ENCODE measurements at regions of chr1 and their contacts with region 1.

Region 1: DNA sequence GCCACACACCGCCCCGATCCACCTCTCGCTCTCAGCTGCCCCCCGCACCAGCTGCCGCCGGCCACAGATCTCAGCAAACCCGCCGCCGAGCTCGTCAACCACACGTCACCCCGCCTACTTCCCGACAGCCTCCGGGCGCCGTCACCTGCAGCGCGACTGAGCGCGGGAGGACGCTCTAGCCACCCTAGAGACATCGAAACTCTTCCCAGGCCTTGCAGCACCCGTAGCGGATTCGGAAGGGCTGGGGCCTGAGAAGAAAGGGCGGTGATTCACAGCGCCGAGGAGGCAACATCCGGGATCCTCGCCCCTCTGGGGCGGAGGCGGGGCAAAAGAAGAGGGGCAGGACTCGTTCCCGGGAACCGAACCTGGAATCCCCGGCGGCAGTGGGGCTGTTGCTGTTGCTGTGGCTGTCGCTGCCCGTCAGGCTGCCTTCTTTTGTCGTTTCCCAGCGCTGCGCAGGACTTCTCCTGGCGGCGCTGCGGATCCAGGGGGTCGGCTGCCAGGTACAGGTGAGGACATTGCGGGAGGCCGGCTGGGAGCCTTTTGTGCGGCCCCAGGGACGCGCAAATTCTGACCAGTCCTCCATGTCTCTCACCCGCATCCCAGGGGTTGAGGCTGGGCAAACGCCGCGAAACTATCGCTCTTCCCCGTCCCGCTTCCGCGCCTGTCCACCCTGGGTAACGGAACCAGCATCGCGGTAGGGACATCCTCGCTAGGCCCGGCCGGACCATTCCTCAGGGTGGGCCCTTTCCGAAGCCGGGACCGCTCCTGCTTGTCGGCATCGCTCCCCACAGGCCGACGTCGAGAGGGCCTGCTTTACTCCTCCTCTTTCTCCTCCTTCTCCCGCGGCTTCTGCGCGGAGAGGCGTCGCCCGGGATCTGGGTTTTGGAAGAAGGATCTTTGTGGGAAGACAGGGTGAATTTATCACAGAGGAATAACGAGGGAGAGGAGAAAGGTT is at the starts of genes RO60 and UCHL5:
- DNase-seq: peak; percentile 96
- H3K4me3 ChIP-seq: peak within 1 kb of the TSS; percentile 63 to 80
- H3K27ac ChIP-seq: peak within 1 kb of the TSS; percentile 93 to 95
- H3K4me1 ChIP-seq: peaks cover 0 to 4% of the 10 kb centered on the region in 2 donors
- H3K27me3 ChIP-seq: no peaks in the 10 kb centered on the region
- CTCF ChIP-seq: peak in 2 of 4 experiments; percentile 22 to 59
- POLR2A ChIP-seq: peak; percentile 74 to 84
- total RNA-seq, gene RO60: 68.9 to 290 (median 98.1) TPM
- total RNA-seq, gene UCHL5: 7.4 to 40.9 (median 23.1) TPM

Region 2: DNA sequence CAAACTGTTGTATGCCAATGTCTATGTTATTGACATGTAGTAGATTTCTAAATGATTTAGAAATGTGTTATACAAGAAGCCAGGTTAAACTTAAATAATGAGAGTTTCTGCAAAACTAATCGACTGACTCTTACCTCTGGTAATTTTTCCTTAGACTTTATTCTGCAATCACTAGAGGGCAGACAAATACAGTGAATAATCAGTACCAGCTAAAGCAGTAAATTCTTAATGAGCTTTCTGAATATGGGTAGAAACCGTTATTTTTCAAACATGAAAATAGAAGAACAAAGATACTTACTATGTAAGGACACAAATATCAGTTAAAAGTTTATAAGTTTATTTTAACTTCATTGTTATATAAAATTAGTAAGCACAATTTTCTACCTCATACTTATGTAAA is 581.9 kb before region 1 on chr1:
- intact Hi-C with region 1: no loop called
- DNase-seq: no peak
- H3K4me3 ChIP-seq: no peak overlapping the region
- H3K27ac ChIP-seq: no peak overlapping the region
- H3K4me1 ChIP-seq: no peaks in the 10 kb centered on the region
- H3K27me3 ChIP-seq: no peaks in the 10 kb centered on the region
- CTCF ChIP-seq: peak; percentile 54 to 79 (median 66)
- POLR2A ChIP-seq: no peak

Region 3: DNA sequence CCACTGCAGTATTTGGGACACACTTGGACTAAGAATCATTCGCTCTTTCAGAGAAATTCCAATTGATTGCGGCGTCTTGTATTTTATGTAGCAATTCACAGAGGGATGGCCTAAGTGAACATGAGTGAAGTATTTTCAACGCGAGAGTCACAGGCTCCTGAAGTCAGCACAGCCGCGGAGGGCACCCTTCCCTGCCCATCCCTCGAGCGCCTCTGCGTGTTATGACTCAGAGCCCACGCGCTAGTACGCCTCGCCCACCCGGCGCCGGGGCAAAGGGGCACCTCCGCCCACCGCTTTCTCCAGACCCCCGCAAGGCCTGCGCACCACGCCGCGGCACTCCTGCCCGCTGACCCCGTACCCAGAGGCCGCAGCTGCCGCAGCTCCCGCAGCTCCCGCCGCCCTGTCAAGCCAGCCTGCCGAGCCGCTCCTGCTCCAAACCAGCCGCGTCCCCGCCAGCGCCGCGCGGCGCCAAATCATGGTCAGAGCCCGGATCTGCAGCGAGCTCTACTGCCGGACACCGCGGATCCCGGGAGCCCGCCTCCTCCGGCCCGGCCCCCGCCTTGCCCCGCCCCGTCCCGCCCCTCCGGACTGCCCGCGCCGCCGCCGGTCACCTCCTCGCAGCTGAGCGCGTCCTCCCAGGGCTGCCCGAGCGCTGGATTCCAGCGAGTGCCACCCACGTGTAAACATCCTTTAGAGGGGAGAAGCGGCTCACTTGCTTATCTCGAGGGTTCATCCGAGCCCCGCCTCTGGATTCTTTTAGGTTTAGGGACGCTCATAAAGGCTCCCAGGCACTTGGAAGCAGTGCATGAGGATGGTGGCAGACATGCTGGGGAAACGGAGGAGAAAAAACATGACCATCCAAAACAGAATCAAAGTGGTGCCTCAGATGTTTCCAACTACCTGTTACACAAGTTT is 45.6 kb after region 1 on chr1 and contains the start of gene GLRX2:
- intact Hi-C with region 1: loop called (anchors 10 kb)
- DNase-seq: peak; percentile 83 to 86
- H3K4me3 ChIP-seq: peak within 1 kb of the TSS; percentile 73 to 95
- H3K27ac ChIP-seq: peak within 1 kb of the TSS; percentile 92 to 97
- H3K4me1 ChIP-seq: peaks cover 6 to 10% of the 10 kb centered on the region in 2 donors
- H3K27me3 ChIP-seq: no peaks in the 10 kb centered on the region
- CTCF ChIP-seq: peak in 2 of 4 experiments; percentile 9 to 18
- POLR2A ChIP-seq: peak; percentile 61 to 88
- total RNA-seq, gene GLRX2: 1.0 to 10.8 (median 6.6) TPM

Region 4: GRCh38 chr1:193143285-193143684 is 83.7 kb after region 1 on chr1:
- intact Hi-C with region 1: no loop called
- DNase-seq: no peak
- H3K4me3 ChIP-seq: no peak overlapping the region
- H3K27ac ChIP-seq: no peak overlapping the region
- H3K4me1 ChIP-seq: no peaks in the 10 kb centered on the region
- H3K27me3 ChIP-seq: no peaks in the 10 kb centered on the region
- CTCF ChIP-seq: no peak
- POLR2A ChIP-seq: no peak

Measured in uterus (tissue), 4 donors.